ENCODE measurements at regions of chr10 and their contacts with region 1.

Region 1: GRCh38 chr10:60175441-60175971 is 214.2 kb downstream of the ANK3 start:
- DNase-seq: peak; percentile 82
- H3K4me3 ChIP-seq: no peak overlapping the region
- H3K27ac ChIP-seq: no peak overlapping the region
- H3K4me1 ChIP-seq: peaks cover 12% of the 10 kb centered on the region
- H3K27me3 ChIP-seq: no peaks in the 10 kb centered on the region
- CTCF ChIP-seq: no peak
- POLR2A ChIP-seq: no peak

Region 2: GRCh38 chr10:60114765-60115586 is 60.5 kb before region 1 on chr10:
- CTCF ChIA-PET with region 1: interaction called, 11 read pairs
- POLR2A ChIA-PET with region 1: no interaction called
- dilution Hi-C with region 1: no loop called
- intact Hi-C with region 1: no loop called
- DNase-seq: peak; percentile 69
- H3K4me3 ChIP-seq: no peak overlapping the region
- H3K27ac ChIP-seq: no peak overlapping the region
- H3K4me1 ChIP-seq: no peaks in the 10 kb centered on the region
- H3K27me3 ChIP-seq: no peaks in the 10 kb centered on the region
- CTCF ChIP-seq: peak; percentile 49 to 55
- POLR2A ChIP-seq: no peak

Region 3: DNA sequence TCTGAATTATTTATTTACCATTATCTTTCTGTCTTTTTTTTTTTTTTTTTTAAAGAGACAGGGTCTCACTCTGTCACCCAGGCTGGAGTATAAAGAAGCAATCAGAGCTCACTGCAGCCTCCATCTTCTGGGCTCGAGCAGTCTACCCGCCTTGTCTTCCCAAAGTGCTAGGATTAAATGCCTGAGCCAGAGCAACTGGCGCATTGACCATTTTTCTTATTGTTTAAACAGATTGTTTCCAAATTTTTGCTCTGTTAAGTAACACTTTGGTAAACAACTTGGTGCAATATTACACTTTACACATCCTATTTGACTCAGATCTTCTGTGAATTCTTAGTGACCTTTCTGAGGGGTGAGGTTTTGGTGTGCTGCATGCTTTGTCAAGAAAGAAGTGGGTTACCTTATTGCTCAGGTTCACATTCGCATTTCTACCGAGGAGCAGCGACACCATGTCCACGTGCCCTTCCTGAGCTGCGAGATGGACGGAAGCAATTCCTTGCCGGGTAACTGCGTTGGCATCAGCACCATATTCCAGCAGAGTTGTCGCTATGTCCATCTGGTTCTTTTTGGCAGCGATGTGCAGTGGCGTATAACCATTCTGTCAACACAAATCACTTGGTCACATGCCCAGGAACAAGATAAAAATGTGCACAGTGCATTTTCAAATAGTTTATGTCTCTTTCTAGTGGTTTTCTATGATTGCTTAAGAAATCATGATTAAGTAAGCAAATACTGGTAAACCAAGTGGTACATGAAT is 11.0 kb after region 1 on chr10:
- CTCF ChIA-PET with region 1: interaction called, 10 read pairs
- POLR2A ChIA-PET with region 1: no interaction called
- dilution Hi-C with region 1: no loop called
- intact Hi-C with region 1: no loop called
- DNase-seq: no peak
- H3K4me3 ChIP-seq: no peak overlapping the region
- H3K27ac ChIP-seq: no peak overlapping the region
- H3K4me1 ChIP-seq: peaks cover 9% of the 10 kb centered on the region
- H3K27me3 ChIP-seq: no peaks in the 10 kb centered on the region
- CTCF ChIP-seq: no peak
- POLR2A ChIP-seq: no peak